A549 (cell line): ENCODE measurements at regions of chr18 and their contacts with region 1.

Region 1: DNA sequence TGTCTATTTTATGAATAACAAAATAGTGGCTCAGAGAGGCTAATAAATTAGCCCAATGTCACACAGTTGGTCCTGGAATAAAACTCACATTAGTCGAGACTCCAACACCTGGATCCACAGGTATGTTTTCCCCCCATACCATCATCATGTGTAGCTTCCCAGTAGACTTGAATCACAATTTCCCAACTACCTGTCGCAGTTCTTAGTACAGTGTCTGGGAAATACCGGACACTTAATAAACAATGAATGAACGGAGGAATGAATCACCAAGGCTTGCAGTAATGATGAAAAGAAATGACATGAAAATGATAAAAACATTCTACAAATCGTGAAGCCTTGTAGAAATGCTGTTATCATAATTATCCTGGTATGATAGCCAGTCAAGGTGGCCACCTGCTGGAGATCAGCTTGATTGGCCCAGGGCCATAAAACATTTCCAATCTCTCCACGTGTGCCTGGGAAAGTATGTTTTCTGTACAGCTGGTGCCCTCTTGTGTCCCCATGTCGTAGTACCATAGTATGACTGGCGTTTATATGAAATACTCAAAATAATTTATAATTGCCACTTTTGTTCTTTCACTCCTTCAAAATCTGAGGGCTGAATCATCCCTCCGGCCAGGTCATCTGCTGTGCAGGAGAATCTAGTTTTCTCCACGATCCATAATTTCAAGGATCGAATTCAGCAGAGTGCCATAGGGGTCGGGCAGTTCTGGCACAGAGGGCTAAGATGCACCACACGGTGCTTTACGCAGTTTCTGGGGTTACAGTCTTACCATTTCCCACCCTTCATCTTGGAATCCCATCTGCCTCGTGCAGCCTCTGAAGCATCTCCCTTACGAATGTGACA is 95.4 kb downstream of the LAMA1 start:
- DNase-seq: peak; percentile 52 to 73
- ATAC-seq: peak; percentile 91
- H3K4me3 ChIP-seq: no peak overlapping the region
- H3K27ac ChIP-seq: no peak overlapping the region
- H3K4me1 ChIP-seq: peaks cover 4% of the 10 kb centered on the region; the same call in 1 of the 3 replicates
- CTCF ChIP-seq: peak; percentile 67
- EP300 ChIP-seq: no peak
- POLR2A ChIP-seq: no peak
- RAD21 ChIP-seq: peak; percentile 66

Region 2: GRCh38 chr18:6741232-6741663 is 281.0 kb before region 1 on chr18:
- CTCF ChIA-PET with region 1: no interaction called
- POLR2A ChIA-PET with region 1: no interaction called
- DNase-seq: peak; percentile 4 to 18
- ATAC-seq: peak in 1 of 2 experiments; percentile 66; a peak in 1 of 6 replicates
- H3K4me3 ChIP-seq: no peak overlapping the region
- H3K27ac ChIP-seq: no peak overlapping the region
- H3K4me1 ChIP-seq: no peaks in the 10 kb centered on the region; the same call in 2 of the 3 replicates
- CTCF ChIP-seq: no peak
- EP300 ChIP-seq: no peak
- POLR2A ChIP-seq: no peak
- RAD21 ChIP-seq: no peak

Region 3: GRCh38 chr18:6920099-6920899 is 101.9 kb before region 1 on chr18:
- CTCF ChIA-PET with region 1: interaction called, 40 read pairs
- POLR2A ChIA-PET with region 1: no interaction called
- DNase-seq: peak; percentile 13 to 63
- ATAC-seq: peak; percentile 64 to 74; a peak in 5 of 6 replicates
- H3K4me3 ChIP-seq: no peak overlapping the region
- H3K27ac ChIP-seq: no peak overlapping the region
- H3K4me1 ChIP-seq: no peaks in the 10 kb centered on the region
- CTCF ChIP-seq: peak; percentile 73
- EP300 ChIP-seq: no peak
- POLR2A ChIP-seq: no peak
- RAD21 ChIP-seq: peak; percentile 80 to 82

Region 4: GRCh38 chr18:7038330-7038851 is 16.2 kb after region 1 on chr18:
- CTCF ChIA-PET with region 1: interaction called, 10 read pairs
- POLR2A ChIA-PET with region 1: no interaction called
- DNase-seq: peak in 1 of 2 experiments; percentile 24
- ATAC-seq: peak; percentile 50 to 81; a peak in 3 of 6 replicates
- H3K4me3 ChIP-seq: no peak overlapping the region
- H3K27ac ChIP-seq: no peak overlapping the region
- H3K4me1 ChIP-seq: no peaks in the 10 kb centered on the region
- CTCF ChIP-seq: no peak
- EP300 ChIP-seq: no peak
- POLR2A ChIP-seq: no peak
- RAD21 ChIP-seq: peak in 1 of 2 experiments; percentile 42; a peak in 2 of 5 replicates